ENCODE measurements at regions of chr7 and their contacts with region 1.

Region 1: GRCh38 chr7:65750511-65751344 is 122.1 kb upstream of the VKORC1L1 start:
- DNase-seq: peak; percentile 84
- H3K4me3 Mint-ChIP-seq: peak overlapping the region; percentile 91
- H3K27ac Mint-ChIP-seq: peak overlapping the region; percentile 88
- H3K4me1 Mint-ChIP-seq: peaks cover 15% of the 10 kb centered on the region
- H3K27me3 Mint-ChIP-seq: no peaks in the 10 kb centered on the region

Region 2: DNA sequence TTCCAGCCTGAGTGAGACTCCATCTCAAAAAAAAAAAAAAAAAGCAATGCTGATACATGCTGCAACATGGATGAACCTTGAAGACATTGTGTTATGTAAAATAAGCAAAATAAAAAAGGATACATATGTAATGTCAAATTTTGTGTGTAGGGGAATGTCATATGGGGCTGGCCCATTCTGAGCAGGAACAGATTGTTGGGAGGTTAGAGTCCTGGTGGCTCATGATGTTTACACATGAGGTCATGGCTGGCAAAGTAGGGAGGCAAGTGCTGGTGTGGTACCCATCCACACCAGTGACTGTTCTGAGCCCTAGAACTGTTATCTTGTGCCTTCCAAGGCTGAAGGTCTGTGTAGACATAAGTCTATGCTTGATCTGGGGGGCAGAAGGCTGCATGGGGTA is 339.5 kb before region 1 on chr7:
- intact Hi-C with region 1: no loop called
- DNase-seq: no peak
- H3K4me3 Mint-ChIP-seq: no peak overlapping the region
- H3K27ac Mint-ChIP-seq: no peak overlapping the region
- H3K4me1 Mint-ChIP-seq: no peaks in the 10 kb centered on the region
- H3K27me3 Mint-ChIP-seq: no peaks in the 10 kb centered on the region

Region 3: GRCh38 chr7:65809259-65809981 is 58.7 kb after region 1 on chr7:
- intact Hi-C with region 1: no loop called
- DNase-seq: no peak
- H3K4me3 Mint-ChIP-seq: no peak overlapping the region
- H3K27ac Mint-ChIP-seq: no peak overlapping the region
- H3K4me1 Mint-ChIP-seq: no peaks in the 10 kb centered on the region
- H3K27me3 Mint-ChIP-seq: no peaks in the 10 kb centered on the region

Region 4: DNA sequence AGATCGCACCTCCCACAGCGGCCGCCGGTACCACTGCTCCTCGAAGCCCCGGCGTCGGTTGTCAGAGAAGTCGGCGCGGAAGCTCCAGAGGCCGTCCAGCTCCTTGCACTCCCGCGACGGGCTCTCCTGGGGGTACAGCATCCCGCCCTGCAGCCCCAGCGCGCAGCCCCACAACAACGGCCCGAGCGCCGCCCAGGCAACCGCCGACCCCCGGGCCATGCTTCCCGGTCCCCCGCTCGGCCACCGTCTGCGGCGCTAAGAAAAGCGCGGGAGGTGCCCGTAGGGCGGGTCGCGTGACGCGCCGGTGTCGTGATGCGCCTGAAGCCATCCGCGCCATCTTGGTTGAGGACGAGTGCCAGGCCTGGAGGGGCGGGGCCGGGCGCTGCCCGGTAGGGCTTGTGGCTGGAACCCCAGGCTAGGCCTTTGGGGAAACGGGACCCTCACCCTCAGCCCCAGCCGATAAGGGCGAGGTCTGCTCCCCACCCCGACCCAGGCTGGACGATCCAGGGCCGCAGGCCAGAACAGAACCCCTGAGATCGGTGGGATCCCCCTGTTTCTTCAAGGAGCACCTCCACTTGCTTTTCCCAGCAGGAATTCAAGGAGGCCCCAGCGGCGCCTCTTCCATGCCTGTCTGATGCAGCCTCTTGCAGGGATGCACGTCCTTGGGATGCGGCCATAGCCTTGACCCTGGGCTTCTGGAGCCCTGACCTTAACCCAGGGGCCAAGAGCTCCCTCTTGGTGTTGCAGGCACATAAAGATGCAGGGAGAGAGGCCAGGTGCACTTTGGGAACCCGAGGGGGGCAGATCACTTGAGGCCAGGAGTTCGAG is 231.5 kb after region 1 on chr7 and contains the start of gene GUSB:
- intact Hi-C with region 1: loop called (anchors 2 kb)
- DNase-seq: peak; percentile 86
- H3K4me3 Mint-ChIP-seq: peak within 1 kb of the TSS; percentile 86
- H3K27ac Mint-ChIP-seq: peak within 1 kb of the TSS; percentile 94
- H3K4me1 Mint-ChIP-seq: peaks cover 7% of the 10 kb centered on the region
- H3K27me3 Mint-ChIP-seq: no peaks in the 10 kb centered on the region
- total RNA-seq, gene GUSB: 62.5 and 68.2 TPM in 2 replicates

Region 5: GRCh38 chr7:67302113-67303039 is 1551.6 kb after region 1 on chr7:
- intact Hi-C with region 1: loop called (anchors 2 kb)
- DNase-seq: peak; percentile 96
- H3K4me3 Mint-ChIP-seq: peak overlapping the region; percentile 84
- H3K27ac Mint-ChIP-seq: peak overlapping the region; percentile 95
- H3K4me1 Mint-ChIP-seq: peaks cover 15% of the 10 kb centered on the region
- H3K27me3 Mint-ChIP-seq: no peaks in the 10 kb centered on the region

Measured in activated T-helper 2 cell treated with anti-CD3 and anti-CD28 coated beads, Interferon-gamma antibody, Interleukin-2, Interleukin-4, amounts not matched to agents 10 μg/mL and 5 μg/mL and 100 μg/mL, durations not matched to agents 14 hours and 24 hours and 36 hours (primary cell).